ENCODE measurements at regions of chr22 and their contacts with region 1.

Region 1: DNA sequence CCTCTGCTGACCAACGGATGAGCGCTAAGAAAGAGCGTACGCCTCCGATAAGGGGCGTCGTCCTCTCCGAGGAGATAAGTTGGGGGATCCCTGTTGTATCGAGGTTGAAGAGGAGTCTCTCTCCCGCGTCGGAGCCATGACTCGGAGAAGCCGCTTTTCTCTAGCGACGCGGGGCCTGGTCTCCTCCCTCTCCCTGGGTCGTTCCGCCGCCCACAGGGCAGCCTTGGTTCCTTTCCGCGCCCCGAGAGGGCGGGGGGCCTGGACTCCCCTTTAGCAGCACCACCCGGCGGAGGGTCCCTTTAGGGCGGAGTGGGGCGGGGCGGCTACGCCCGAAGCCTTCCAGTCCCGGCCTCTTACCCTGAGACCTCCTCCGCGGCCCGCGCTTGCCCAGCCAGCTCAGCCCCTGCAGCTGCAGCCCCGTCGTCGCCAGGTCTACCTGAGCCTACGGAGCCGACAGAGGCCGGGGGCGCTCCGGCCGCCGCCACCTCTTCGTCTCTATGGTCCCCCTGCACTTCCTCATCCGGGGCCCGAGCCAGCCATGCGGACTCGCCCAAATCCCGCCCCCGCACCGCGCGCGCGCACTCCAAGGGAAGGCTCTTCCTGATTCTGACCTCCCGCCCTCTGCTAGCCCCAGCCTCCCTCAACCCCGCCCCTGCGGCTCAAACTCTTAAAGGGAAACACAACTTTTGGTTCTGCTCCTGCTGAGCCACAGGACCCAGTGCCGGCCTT is at the start of gene PRR14L:
- DNase-seq: peak; percentile 96 to 100 (median 99)

Region 2: GRCh38 chr22:31661851-31662656 is 87.7 kb before region 1 on chr22 and contains the start of gene PISD:
- intact Hi-C with region 1: loop called (anchors 10 kb)
- DNase-seq: peak; percentile 89 to 97 (median 94)